Posterior cingulate gyrus (tissue), 11 donors: ENCODE measurements at regions of chr2 and their contacts with region 1.

Region 1: DNA sequence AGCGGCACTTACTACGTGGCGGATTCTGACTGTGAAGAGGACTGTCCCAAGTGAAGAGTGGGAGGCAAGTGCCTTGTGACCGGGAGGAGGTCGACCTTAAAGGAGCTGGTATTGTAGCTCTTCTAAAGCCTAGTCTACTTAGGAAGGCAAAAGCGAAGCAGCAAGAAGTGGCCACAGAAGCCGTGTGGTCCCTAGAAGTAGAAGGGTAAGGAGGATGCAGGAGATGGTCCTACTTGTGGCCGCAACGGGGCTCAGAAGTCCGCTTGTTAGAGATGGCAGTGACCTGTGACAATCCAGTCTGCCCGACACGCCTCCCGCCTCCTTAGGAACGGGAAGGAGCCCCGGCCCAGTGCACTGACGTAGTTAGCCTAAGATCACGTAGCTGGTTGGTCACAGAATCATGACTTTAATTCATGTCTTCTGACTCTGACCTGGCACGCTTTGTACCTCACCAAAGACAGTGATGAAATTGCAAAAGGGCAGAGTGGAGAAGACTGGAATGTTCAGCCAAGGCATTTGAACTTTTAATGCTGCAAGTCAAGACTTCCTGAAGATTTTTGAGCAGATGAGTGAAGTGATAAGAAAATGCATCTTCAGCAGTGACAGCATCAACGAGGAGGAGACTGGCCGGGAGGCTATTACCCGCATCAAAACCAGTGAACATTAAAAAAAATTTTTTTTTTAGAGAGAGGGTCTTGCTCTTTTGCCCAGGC is 748 bp upstream of the EIF2AK3 start:
- DNase-seq: peak in 8 of 10 donors; percentile 37 to 95 (median 64)

Region 2: GRCh38 chr2:88691339-88692183 is 63.5 kb after region 1 on chr2 and contains the start of gene RPIA:
- intact Hi-C with region 1: loop called (anchors 1 kb)
- DNase-seq: peak; percentile 98 to 100 (median 99)

Region 3: GRCh38 chr2:88885275-88885674 is 257.3 kb after region 1 on chr2:
- intact Hi-C with region 1: no loop called
- DNase-seq: no peak